GM12878 (cell line): ENCODE measurements at regions of chr5 and their contacts with region 1.

Region 1: GRCh38 chr5:131281133-131281867 is 17.4 kb downstream of the CDC42SE2 start:
- DNase-seq: no peak
- ATAC-seq: peak; percentile 61
- H3K4me3 ChIP-seq: peak overlapping the region; percentile 44
- H3K27ac ChIP-seq: peak overlapping the region; percentile 89
- H3K4me1 ChIP-seq: peaks cover 55% of the 10 kb centered on the region
- H3K27me3 ChIP-seq: no peaks in the 10 kb centered on the region
- CTCF ChIP-seq: no peak
- EP300 ChIP-seq: peak in 1 of 2 experiments; percentile 13; a peak in 1 of 4 replicates
- POLR2A ChIP-seq: no peak
- RAD21 ChIP-seq: peak; percentile 17; the same call in 1 of the 2 replicates

Region 2: GRCh38 chr5:131129306-131129705 is 152.0 kb before region 1 on chr5:
- CTCF ChIA-PET with region 1: no interaction called
- POLR2A ChIA-PET with region 1: no interaction called
- RAD21 ChIA-PET with region 1: no interaction called
- SMC1A ChIA-PET with region 1: no interaction called
- in situ Hi-C with region 1: no loop called
- intact Hi-C with region 1: no loop called
- DNase-seq: no peak
- ATAC-seq: no peak
- H3K4me3 ChIP-seq: no peak overlapping the region
- H3K27ac ChIP-seq: no peak overlapping the region
- H3K4me1 ChIP-seq: no peaks in the 10 kb centered on the region
- H3K27me3 ChIP-seq: no peaks in the 10 kb centered on the region
- CTCF ChIP-seq: no peak
- EP300 ChIP-seq: no peak
- POLR2A ChIP-seq: no peak
- RAD21 ChIP-seq: no peak

Region 3: GRCh38 chr5:131165119-131165727 is 116.1 kb before region 1 on chr5 and contains the start of gene HINT1:
- CTCF ChIA-PET with region 1: no interaction called
- POLR2A ChIA-PET with region 1: interaction called, 3 read pairs
- RAD21 ChIA-PET with region 1: interaction called, 4 read pairs
- SMC1A ChIA-PET with region 1: interaction called, 5 read pairs
- in situ Hi-C with region 1: no loop called
- intact Hi-C with region 1: loop called (anchors 5 kb)
- DNase-seq: peak; percentile 75
- ATAC-seq: peak; percentile 90
- H3K4me3 ChIP-seq: peak within 1 kb of the TSS; percentile 92
- H3K27ac ChIP-seq: peak within 1 kb of the TSS; percentile 86
- H3K4me1 ChIP-seq: peaks cover 3% of the 10 kb centered on the region; the same call in 1 of the 2 replicates
- H3K27me3 ChIP-seq: no peaks in the 10 kb centered on the region
- CTCF ChIP-seq: peak in 2 of 3 experiments; percentile 18 to 45; a peak in 4 of 6 replicates
- EP300 ChIP-seq: no peak
- POLR2A ChIP-seq: peak; percentile 85
- RAD21 ChIP-seq: peak; percentile 38; the same call in 1 of the 2 replicates
- polyA plus RNA-seq, gene HINT1: 844 to 901 TPM

Region 4: GRCh38 chr5:131270809-131271208 is 10.5 kb before region 1 on chr5:
- CTCF ChIA-PET with region 1: interaction called, 9 read pairs
- POLR2A ChIA-PET with region 1: interaction called, 47 read pairs
- RAD21 ChIA-PET with region 1: interaction called, 70 read pairs
- SMC1A ChIA-PET with region 1: interaction called, 180 read pairs
- in situ Hi-C with region 1: no loop called
- intact Hi-C with region 1: no loop called
- DNase-seq: no peak
- ATAC-seq: no peak
- H3K4me3 ChIP-seq: peak overlapping the region; percentile 70
- H3K27ac ChIP-seq: peak overlapping the region; percentile 71
- H3K4me1 ChIP-seq: peaks cover 31% of the 10 kb centered on the region
- H3K27me3 ChIP-seq: no peaks in the 10 kb centered on the region
- CTCF ChIP-seq: no peak
- EP300 ChIP-seq: no peak
- POLR2A ChIP-seq: no peak
- RAD21 ChIP-seq: no peak

Region 5: DNA sequence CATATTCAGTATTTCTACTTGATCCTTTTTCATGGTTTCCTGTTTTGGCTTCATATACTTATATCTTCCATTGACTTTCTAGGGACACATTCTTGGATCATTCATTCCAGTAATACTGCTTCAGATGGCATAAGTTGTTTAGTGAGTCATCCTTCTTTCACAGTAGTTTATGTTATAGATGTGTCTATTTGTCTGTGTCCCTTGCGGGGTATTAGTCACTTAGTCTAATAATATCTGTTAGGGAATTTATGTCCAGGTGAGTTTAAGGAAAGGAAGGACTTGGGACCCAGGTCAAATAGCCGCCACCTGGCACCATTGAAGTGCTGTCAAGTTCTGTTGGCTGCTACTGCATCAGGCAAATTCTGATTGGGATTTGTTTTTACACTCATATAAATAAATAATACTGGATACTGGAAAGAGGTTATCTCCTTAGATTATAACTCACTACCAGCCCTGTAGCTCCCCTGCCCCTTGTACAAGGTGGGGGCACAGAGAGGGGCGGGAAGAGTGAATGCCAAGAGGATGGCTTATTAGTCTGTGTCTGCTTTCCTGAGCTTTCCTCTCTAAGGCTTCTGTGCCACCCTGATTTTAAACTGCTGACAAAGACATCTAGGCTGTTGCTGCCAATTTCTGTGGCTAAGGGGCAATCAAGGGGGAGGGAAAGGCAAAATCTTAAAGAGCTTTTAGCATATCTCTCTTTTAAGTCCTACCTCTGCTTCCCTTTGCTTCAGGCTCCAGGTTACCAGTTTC is 47.4 kb after region 1 on chr5:
- CTCF ChIA-PET with region 1: no interaction called
- POLR2A ChIA-PET with region 1: no interaction called
- RAD21 ChIA-PET with region 1: no interaction called
- SMC1A ChIA-PET with region 1: interaction called, 8 read pairs
- in situ Hi-C with region 1: no loop called
- intact Hi-C with region 1: loop called (anchors 10 kb)
- DNase-seq: no peak
- ATAC-seq: peak; percentile 36
- H3K4me3 ChIP-seq: no peak overlapping the region
- H3K27ac ChIP-seq: peak overlapping the region; percentile 15; the same call in 1 of the 2 replicates
- H3K4me1 ChIP-seq: peaks cover 3% of the 10 kb centered on the region; the same call in 1 of the 2 replicates
- H3K27me3 ChIP-seq: no peaks in the 10 kb centered on the region
- CTCF ChIP-seq: no peak
- EP300 ChIP-seq: no peak
- POLR2A ChIP-seq: no peak
- RAD21 ChIP-seq: no peak

Region 6: GRCh38 chr5:131375351-131375750 is 94.1 kb after region 1 on chr5:
- CTCF ChIA-PET with region 1: no interaction called
- POLR2A ChIA-PET with region 1: interaction called, 8 read pairs
- RAD21 ChIA-PET with region 1: interaction called, 15 read pairs
- SMC1A ChIA-PET with region 1: interaction called, 18 read pairs
- in situ Hi-C with region 1: no loop called
- intact Hi-C with region 1: no loop called
- DNase-seq: no peak
- ATAC-seq: peak; percentile 35
- H3K4me3 ChIP-seq: peak overlapping the region; percentile 37; the same call in 1 of the 2 replicates
- H3K27ac ChIP-seq: peak overlapping the region; percentile 88
- H3K4me1 ChIP-seq: peaks cover 77% of the 10 kb centered on the region
- H3K27me3 ChIP-seq: no peaks in the 10 kb centered on the region
- CTCF ChIP-seq: no peak
- EP300 ChIP-seq: no peak
- POLR2A ChIP-seq: no peak
- RAD21 ChIP-seq: no peak

Region 7: GRCh38 chr5:131796793-131797693 is 515.7 kb after region 1 on chr5 and contains the start of gene FNIP1:
- CTCF ChIA-PET with region 1: no interaction called
- POLR2A ChIA-PET with region 1: no interaction called
- RAD21 ChIA-PET with region 1: no interaction called
- SMC1A ChIA-PET with region 1: no interaction called
- in situ Hi-C with region 1: no loop called
- intact Hi-C with region 1: loop called (anchors 10 kb)
- DNase-seq: peak; percentile 86
- ATAC-seq: peak; percentile 93
- H3K4me3 ChIP-seq: peak within 1 kb of the TSS; percentile 86
- H3K27ac ChIP-seq: peak within 1 kb of the TSS; percentile 93
- H3K4me1 ChIP-seq: peaks cover 6% of the 10 kb centered on the region
- H3K27me3 ChIP-seq: no peaks in the 10 kb centered on the region
- CTCF ChIP-seq: no peak
- EP300 ChIP-seq: 0 out of 4 replicates have a peak, but pooled peaks of 1 of the 2 experiments have one; percentile 29
- POLR2A ChIP-seq: peak; percentile 97
- RAD21 ChIP-seq: no peak
- polyA plus RNA-seq, gene FNIP1: 4.3 to 7.0 TPM